ENCODE measurements at regions of chr7 and their contacts with region 1.

Region 1: DNA sequence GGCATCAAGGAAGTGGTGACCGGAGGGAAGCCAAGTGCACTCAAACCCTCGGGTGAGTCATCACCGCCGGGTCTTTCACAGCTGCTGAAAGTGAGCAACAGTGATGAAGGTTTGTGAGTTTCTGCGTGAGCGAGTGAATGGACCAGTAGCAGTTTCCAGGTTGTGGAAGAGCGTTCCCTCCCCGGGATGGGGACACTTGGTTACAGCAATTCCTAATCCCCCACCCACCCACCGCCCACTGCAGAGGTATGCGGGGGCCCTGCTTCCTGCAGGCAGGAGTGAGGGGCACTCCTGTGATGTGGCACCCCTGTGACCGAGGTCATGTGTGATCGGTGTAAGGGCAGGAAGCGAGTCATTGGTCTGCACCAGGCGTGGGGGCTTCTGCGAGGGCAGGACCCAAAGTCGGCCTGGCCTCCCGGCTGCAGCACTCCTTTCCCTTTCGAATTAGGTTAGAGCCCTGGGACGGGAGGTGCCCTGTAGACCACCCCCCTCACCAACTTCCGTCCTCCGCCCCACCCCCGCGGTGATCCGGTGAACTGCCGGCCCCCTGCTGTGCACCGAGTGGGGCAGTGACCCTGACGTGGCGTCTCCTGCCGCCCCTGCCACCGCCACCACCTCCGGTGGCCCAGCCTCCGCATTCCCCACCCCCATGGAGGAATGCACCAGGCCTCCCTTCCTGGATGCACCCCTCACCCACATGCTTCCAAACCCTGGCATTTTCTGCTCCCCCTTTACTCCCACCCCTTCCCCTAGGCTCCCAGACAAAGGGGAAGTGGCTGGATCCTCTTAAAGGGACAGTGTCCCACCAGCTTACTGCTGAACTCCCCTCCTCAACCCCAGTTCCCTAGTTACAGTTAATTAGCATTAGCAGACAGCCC is 10.9 kb downstream of the LIMK1 start:
- DNase-seq: peak; percentile 79 to 87
- H3K4me3 ChIP-seq: peak overlapping the region; percentile 1 to 51 (median 20); a peak in 6 of 8 replicates
- H3K27ac ChIP-seq: peak overlapping the region; percentile 52; the same call in 1 of the 2 replicates
- H3K4me1 ChIP-seq: peaks cover 8 to 31% (median 26%) of the 10 kb centered on the region in 4 experiments
- H3K27me3 ChIP-seq: no peaks in the 10 kb centered on the region
- CTCF ChIP-seq: no peak
- EP300 ChIP-seq: no peak
- POLR2A ChIP-seq: 0 out of 3 replicates have a peak, but pooled peaks of 1 of the 2 experiments have one; percentile 36
- RAD21 ChIP-seq: peak in 1 of 2 experiments; percentile 14; a peak in 1 of 4 replicates

Region 2: DNA sequence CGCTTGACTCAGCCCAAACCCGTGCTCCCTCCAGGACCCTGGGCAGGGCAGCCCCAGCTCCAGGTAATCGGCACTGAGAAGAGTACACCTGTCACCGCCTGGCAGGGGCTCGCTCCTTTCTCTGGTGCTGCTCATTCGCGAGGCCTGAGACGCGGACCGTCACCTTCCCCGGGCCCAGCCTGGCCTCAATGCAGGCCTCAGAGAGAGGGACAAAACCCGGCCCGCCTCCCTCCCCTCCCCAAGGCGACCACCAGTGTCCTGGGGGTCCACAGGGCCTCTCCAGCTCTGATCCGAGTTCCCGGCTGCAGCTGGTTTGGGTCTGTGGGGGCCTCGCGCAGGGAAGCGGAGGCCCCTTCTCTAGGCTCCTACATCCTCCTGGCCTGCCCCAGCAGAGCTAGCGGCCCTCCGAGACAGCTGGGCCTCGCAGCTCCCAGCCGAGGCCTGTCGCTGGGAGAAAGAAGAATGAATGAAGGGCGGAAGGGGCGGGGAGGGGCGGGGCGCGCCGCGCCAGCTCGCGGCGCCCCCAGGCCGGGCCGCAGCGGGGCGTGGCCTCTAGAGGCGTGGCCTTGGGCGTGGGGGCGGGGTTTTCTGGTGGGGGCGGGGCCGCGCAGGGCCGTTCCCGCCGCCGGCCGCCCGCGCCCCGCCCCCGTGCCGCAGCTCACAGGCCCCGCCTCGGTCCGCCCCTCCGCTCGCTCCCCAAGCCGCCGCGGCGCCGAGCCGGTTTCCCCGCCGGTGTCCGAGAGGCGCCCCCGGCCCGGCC is 11.2 kb before region 1 on chr7 and contains the start of gene LIMK1:
- CTCF ChIA-PET with region 1: interaction called, 5 read pairs
- POLR2A ChIA-PET with region 1: interaction called, 14 read pairs
- DNase-seq: peak in 1 of 2 experiments; percentile 86
- H3K4me3 ChIP-seq: peak within 1 kb of the TSS; percentile 59 to 90 (median 64)
- H3K27ac ChIP-seq: peak within 1 kb of the TSS; percentile 3; the same call in 1 of the 2 replicates
- H3K4me1 ChIP-seq: peaks cover 0 to 20% (median 12%) of the 10 kb centered on the region in 4 experiments; a peak in 6 of 7 replicates
- H3K27me3 ChIP-seq: no peaks in the 10 kb centered on the region
- CTCF ChIP-seq: no peak
- EP300 ChIP-seq: no peak
- POLR2A ChIP-seq: peak in 1 of 2 experiments; percentile 44; a peak in 1 of 3 replicates
- RAD21 ChIP-seq: no peak
- total RNA-seq, gene LIMK1: 92.1 and 93.5 TPM in 2 replicates

Region 3: DNA sequence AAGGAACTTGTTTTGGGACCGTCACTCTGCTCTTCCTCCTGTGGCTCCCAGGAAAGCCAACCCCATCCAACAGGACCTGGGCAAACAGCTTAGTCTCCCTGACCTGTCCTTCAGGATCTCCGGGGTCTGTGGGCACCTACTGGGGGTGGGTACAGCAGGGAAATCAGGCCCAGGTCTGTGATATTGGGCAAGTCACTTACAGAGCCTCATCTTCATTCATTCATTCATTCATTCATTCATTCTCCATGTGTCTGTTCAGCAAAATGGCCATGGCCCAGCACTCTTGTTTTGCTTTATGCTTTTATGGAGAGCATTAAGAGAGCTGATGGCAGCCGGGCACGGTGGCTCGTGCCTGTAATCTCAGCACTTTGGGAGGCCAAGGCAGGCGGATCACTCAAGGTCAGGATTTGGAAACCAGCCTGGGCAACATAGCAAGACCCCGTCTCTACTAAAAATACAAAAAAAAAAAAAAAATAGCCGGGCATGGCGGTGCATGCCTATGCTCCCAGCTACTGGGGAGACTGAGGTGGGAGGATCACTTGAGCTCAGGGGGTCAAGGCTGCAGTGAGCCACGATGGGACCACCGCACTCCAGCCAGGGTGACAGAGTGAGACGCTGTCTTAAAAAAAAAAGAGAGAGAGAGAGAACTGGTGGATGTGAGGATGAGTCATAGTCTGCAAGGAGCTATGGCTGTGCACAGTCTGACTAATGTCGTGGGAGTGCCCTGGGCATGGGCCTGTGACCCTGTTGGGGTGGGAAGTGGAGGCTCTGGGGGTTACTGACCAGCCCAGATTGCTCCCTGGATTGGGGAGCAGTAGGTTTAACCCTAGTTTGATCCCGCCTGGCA is 249.0 kb after region 1 on chr7:
- CTCF ChIA-PET with region 1: no interaction called
- POLR2A ChIA-PET with region 1: no interaction called
- DNase-seq: no peak
- H3K4me3 ChIP-seq: no peak overlapping the region
- H3K27ac ChIP-seq: no peak overlapping the region
- H3K4me1 ChIP-seq: no peaks in the 10 kb centered on the region
- H3K27me3 ChIP-seq: no peaks in the 10 kb centered on the region
- CTCF ChIP-seq: no peak
- EP300 ChIP-seq: no peak
- POLR2A ChIP-seq: no peak
- RAD21 ChIP-seq: no peak